IMR-90 (cell line): ENCODE measurements at regions of chr6 and their contacts with region 1.

Region 1: GRCh38 chr6:3977875-3978711 is 100.8 kb downstream of the FAM217A start:
- DNase-seq: peak; percentile 96
- ATAC-seq: peak; percentile 97
- H3K4me3 ChIP-seq: no peak overlapping the region
- H3K27ac ChIP-seq: no peak overlapping the region
- H3K4me1 ChIP-seq: peaks cover 4% of the 10 kb centered on the region
- H3K27me3 ChIP-seq: no peaks in the 10 kb centered on the region
- CTCF ChIP-seq: peak; percentile 85
- POLR2A ChIP-seq: no peak
- RAD21 ChIP-seq: peak; percentile 77

Region 2: GRCh38 chr6:3118353-3119039 is 859.6 kb before region 1 on chr6 and contains the start of gene BPHL:
- CTCF ChIA-PET with region 1: no interaction called
- POLR2A ChIA-PET with region 1: no interaction called
- dilution Hi-C with region 1: no loop called
- in situ Hi-C with region 1: loop called (anchors 25 kb)
- intact Hi-C with region 1: no loop called
- DNase-seq: peak; percentile 89
- ATAC-seq: peak; percentile 97
- H3K4me3 ChIP-seq: peak within 1 kb of the TSS; percentile 72
- H3K27ac ChIP-seq: peak within 1 kb of the TSS; percentile 79
- H3K4me1 ChIP-seq: no peaks in the 10 kb centered on the region
- H3K27me3 ChIP-seq: no peaks in the 10 kb centered on the region
- CTCF ChIP-seq: no peak
- POLR2A ChIP-seq: peak; percentile 76
- RAD21 ChIP-seq: no peak
- total RNA-seq, gene BPHL: 15.8 and 16.3 TPM in 2 replicates

Region 3: DNA sequence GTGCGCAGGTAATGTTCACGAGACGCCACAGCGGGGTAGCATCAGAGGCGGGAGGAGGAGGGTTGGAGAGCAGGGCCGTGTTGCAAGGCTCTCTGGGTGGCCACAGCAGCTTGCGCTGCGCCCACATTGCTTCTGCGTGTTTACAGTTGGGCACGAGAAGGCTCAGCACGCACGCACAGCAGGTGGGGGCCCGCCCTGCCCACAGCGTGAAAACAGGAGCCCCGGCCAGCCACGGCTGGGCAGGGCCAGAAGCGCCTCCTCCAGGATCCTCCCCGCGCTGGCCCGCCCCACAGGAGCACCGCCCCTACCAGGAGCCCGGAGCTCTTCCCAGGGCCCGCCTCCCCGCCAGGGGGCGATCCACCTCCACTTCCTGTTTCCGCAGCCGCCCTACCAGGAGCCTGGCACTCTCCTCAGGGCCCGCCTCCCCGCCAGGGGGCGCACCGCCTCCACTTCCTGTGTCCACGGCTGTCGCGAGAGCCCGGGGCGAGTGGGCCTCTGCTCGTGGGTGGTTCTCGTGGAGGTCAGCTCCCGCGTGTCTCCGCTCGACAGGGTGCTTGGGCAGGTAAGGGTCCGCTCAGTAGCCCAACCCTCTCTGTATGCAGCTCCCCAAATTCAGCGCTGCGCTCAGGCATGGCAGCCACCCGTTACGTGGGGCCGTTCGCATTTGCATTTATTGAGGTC is 129.0 kb before region 1 on chr6 and contains the start of gene FAM50B:
- CTCF ChIA-PET with region 1: interaction called, 25 read pairs
- POLR2A ChIA-PET with region 1: no interaction called
- dilution Hi-C with region 1: no loop called
- in situ Hi-C with region 1: no loop called
- intact Hi-C with region 1: loop called (anchors 1 kb)
- DNase-seq: peak; percentile 80
- ATAC-seq: peak; percentile 96
- H3K4me3 ChIP-seq: peak within 1 kb of the TSS; percentile 65
- H3K27ac ChIP-seq: peak within 1 kb of the TSS; percentile 69
- H3K4me1 ChIP-seq: peaks cover 8% of the 10 kb centered on the region; the same call in 1 of the 2 replicates
- H3K27me3 ChIP-seq: no peaks in the 10 kb centered on the region
- CTCF ChIP-seq: peak; percentile 99
- POLR2A ChIP-seq: no peak
- RAD21 ChIP-seq: peak; percentile 86
- total RNA-seq, gene FAM50B: 3.9 and 4.1 TPM in 2 replicates

Region 4: GRCh38 chr6:3894590-3895311 is 83.3 kb before region 1 on chr6:
- CTCF ChIA-PET with region 1: no interaction called
- POLR2A ChIA-PET with region 1: no interaction called
- dilution Hi-C with region 1: no loop called
- in situ Hi-C with region 1: no loop called
- intact Hi-C with region 1: loop called (anchors 5 kb)
- DNase-seq: no peak
- ATAC-seq: no peak
- H3K4me3 ChIP-seq: no peak overlapping the region
- H3K27ac ChIP-seq: no peak overlapping the region
- H3K4me1 ChIP-seq: no peaks in the 10 kb centered on the region
- H3K27me3 ChIP-seq: peaks cover 3% of the 10 kb centered on the region; the same call in 1 of the 2 replicates
- CTCF ChIP-seq: no peak
- POLR2A ChIP-seq: no peak
- RAD21 ChIP-seq: no peak

Region 5: DNA sequence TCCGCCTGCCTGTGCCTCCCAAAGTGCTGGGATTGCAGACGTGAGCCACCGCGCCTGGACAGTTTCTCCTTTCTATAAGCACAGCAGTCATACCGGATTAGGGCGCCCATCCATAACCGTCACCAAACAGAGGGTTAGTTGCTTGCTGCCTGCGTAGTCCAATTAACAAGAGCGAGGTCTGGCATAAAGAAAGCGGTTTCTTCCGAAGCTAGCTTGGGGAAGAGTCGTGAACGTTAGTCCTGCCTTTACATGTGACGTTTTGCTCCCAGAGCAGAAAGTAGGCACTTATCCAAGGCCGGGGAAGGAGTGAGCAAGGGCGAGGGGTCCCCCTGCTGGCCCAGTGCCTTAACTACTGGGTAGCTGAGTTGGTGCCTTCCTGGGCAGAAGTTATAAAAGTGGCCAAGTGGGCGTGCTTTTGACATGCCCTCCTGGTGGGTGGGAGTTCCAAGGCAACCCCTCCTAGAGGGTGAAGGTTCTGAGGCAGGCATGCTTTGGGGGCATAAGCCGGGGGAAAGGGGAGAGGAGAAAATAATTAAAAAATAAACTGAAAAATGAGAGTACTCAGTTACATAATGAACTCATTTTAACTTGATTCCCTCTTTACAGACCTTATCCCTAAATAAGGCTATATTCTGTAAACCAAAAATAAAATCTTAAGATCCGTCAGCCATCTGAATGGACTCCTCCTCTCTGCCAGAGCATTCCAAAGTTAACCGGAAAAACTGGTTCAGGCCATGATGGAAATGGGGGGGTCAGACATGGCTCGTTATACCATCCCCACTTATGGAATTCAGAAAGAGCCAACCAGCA is 12.8 kb after region 1 on chr6:
- CTCF ChIA-PET with region 1: interaction called, 22 read pairs
- POLR2A ChIA-PET with region 1: no interaction called
- dilution Hi-C with region 1: no loop called
- in situ Hi-C with region 1: no loop called
- intact Hi-C with region 1: no loop called
- DNase-seq: peak; percentile 88
- ATAC-seq: peak; percentile 96
- H3K4me3 ChIP-seq: peak overlapping the region; percentile 5; the same call in 1 of the 2 replicates
- H3K27ac ChIP-seq: peak overlapping the region; percentile 11; the same call in 1 of the 2 replicates
- H3K4me1 ChIP-seq: peaks cover 6% of the 10 kb centered on the region
- H3K27me3 ChIP-seq: no peaks in the 10 kb centered on the region
- CTCF ChIP-seq: peak; percentile 97
- POLR2A ChIP-seq: no peak
- RAD21 ChIP-seq: peak; percentile 94

Region 6: GRCh38 chr6:3997177-3997770 is 19.2 kb after region 1 on chr6:
- CTCF ChIA-PET with region 1: interaction called, 10 read pairs
- POLR2A ChIA-PET with region 1: no interaction called
- dilution Hi-C with region 1: no loop called
- in situ Hi-C with region 1: no loop called
- intact Hi-C with region 1: no loop called
- DNase-seq: peak; percentile 82
- ATAC-seq: peak; percentile 98
- H3K4me3 ChIP-seq: no peak overlapping the region
- H3K27ac ChIP-seq: no peak overlapping the region
- H3K4me1 ChIP-seq: no peaks in the 10 kb centered on the region; the same call in 1 of the 2 replicates
- H3K27me3 ChIP-seq: no peaks in the 10 kb centered on the region
- CTCF ChIP-seq: no peak
- POLR2A ChIP-seq: no peak
- RAD21 ChIP-seq: no peak

Region 7: DNA sequence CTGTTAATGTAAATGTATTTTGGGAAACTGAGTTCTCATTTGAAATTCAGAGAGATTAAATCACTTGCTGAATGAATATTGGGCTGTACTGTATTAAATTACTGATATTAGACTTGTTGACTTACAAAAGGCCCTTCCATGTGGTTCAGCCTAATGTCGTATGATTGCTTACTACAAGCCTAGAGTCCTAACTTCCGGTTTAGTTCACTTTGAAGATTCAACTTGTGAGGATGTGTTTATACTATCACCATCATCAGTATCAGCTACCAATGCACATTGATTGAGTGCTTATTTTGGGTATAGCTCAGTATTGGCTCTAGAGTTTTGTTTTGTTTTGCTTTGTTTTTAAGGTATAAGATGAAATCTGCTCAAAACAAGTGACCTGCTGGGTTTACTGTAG is 52.6 kb after region 1 on chr6:
- CTCF ChIA-PET with region 1: no interaction called
- POLR2A ChIA-PET with region 1: no interaction called
- dilution Hi-C with region 1: no loop called
- in situ Hi-C with region 1: no loop called
- intact Hi-C with region 1: no loop called
- DNase-seq: no peak
- ATAC-seq: no peak
- H3K4me3 ChIP-seq: no peak overlapping the region
- H3K27ac ChIP-seq: no peak overlapping the region
- H3K4me1 ChIP-seq: no peaks in the 10 kb centered on the region; the same call in 1 of the 2 replicates
- H3K27me3 ChIP-seq: no peaks in the 10 kb centered on the region
- CTCF ChIP-seq: no peak
- POLR2A ChIP-seq: no peak
- RAD21 ChIP-seq: no peak